Caco-2 (cell line): ENCODE measurements at regions of chr1 and their contacts with region 1.

Region 1: DNA sequence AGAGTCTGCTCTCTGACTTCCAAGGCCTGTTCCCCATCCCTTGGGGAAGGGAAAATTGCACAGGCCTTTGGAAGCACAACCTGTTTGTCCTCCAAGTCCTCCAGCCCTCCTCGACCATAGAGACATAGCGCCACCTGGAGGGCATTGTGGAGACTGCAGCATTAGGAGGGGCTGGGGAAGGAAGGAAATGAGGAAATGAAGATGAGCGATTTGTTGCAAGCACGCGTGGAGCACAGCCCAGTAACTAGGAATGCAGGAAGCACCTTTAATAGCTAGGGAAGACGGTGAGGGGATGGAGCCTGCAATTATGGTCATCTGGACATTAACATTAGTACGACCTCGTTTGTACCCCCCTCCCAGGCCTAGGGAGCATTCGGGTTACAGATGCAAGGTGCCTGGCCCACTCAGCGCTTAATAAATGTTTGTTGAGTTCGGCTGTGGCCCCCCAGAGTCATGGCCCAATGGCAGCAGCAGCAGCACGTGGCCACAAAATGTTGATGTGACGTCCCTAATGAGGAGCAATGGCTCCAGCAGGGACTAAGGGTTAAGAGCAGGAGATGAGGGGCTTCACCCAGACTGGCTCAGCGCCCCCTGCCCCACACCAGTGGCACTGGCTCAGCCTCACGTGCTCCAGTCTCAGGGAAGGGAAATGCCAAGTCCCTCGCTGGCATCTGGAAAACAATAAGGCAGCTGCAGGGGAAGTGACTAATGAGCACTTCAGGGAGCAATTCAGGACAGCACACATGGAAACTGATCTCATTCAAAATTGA is 8.0 kb upstream of the CAMK2N1 start:
- DNase-seq: peak; percentile 79 to 87
- H3K4me3 ChIP-seq: no peak overlapping the region
- H3K4me3 Mint-ChIP-seq: no peak overlapping the region
- H3K27ac Mint-ChIP-seq: no peak overlapping the region
- H3K4me1 ChIP-seq: no peaks in the 10 kb centered on the region
- H3K4me1 Mint-ChIP-seq: peaks cover 6% of the 10 kb centered on the region
- H3K27me3 ChIP-seq: no peaks in the 10 kb centered on the region
- H3K27me3 Mint-ChIP-seq: no peaks in the 10 kb centered on the region
- CTCF ChIP-seq: peak; percentile 82 to 84

Region 2: DNA sequence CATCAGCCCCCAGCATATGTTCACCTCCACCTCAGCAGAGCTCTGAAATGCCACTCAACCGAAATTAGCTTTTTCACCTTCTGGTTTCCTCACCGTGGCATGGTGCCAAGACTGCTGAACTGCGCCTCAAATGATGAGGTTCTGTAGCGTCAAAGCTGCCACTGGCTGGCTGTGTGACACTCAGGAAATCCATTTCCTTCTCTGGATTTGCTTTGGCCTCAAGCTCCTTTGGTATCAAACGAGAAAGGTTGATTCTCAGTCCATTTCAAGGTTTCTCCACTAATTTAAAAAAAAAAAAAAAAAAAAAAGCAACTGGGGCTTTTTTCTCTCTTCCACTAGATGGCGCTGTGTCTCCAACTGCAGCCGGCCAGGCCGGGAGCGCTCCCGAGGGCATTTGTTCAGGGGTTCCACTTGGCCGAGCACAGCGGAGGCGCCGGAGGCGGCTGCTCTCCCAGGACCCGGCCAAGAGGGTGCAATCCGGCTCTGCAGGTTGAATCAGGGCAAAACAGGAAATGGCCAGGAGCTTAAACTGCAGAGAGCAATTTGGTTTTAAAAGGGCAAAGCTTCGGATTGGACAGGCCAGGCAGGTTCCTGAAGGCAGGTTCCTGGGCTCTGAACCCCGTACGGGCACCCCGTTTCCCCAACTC is 281.2 kb before region 1 on chr1:
- CTCF ChIA-PET with region 1: interaction called, 3 read pairs
- POLR2A ChIA-PET with region 1: no interaction called
- intact Hi-C with region 1: loop called (anchors 2 kb)
- DNase-seq: peak; percentile 70 to 73
- H3K4me3 ChIP-seq: no peak overlapping the region
- H3K4me3 Mint-ChIP-seq: no peak overlapping the region
- H3K27ac Mint-ChIP-seq: no peak overlapping the region
- H3K4me1 ChIP-seq: no peaks in the 10 kb centered on the region
- H3K4me1 Mint-ChIP-seq: no peaks in the 10 kb centered on the region
- H3K27me3 ChIP-seq: no peaks in the 10 kb centered on the region; the same call in 1 of the 2 replicates
- H3K27me3 Mint-ChIP-seq: peaks cover 13% of the 10 kb centered on the region
- CTCF ChIP-seq: peak; percentile 52 to 74

Region 3: GRCh38 chr1:20361806-20362640 is 132.0 kb before region 1 on chr1:
- CTCF ChIA-PET with region 1: interaction called, 3 read pairs
- POLR2A ChIA-PET with region 1: no interaction called
- intact Hi-C with region 1: loop called (anchors 1 kb)
- DNase-seq: peak; percentile 60 to 74
- H3K4me3 ChIP-seq: no peak overlapping the region
- H3K4me3 Mint-ChIP-seq: no peak overlapping the region
- H3K27ac Mint-ChIP-seq: no peak overlapping the region
- H3K4me1 ChIP-seq: no peaks in the 10 kb centered on the region
- H3K4me1 Mint-ChIP-seq: no peaks in the 10 kb centered on the region
- H3K27me3 ChIP-seq: no peaks in the 10 kb centered on the region; the same call in 1 of the 2 replicates
- H3K27me3 Mint-ChIP-seq: peaks cover 8% of the 10 kb centered on the region
- CTCF ChIP-seq: peak; percentile 63 to 79

Region 4: DNA sequence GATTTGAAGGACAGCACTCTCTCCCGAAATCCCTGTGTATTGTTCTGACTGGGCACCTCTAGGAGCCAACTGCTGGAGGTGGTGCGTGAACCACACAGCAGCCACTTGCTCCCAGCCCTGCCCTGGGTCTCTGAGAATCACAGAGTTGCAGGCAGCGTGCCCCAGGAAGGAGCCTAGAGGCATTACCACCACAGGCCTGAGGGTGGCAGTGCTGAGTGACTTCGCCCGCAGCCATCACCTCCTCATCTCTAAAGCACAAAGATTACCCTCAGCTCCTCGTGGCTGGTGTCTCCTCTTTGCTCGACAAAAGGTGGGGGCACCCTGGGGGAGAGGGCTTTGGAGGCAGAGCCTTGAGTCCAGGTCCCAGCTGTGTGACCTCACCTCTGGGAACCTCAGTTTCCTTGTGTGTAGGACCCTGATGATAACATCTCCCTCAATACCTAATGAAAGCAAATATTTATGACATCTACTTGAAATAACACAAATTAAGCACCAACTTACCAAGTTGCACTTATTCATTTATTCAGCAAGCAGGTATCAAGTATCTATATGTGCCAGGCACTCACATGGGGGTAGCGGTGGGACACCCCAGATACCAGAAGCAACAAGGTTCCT is 117.0 kb before region 1 on chr1:
- CTCF ChIA-PET with region 1: interaction called, 4 read pairs
- POLR2A ChIA-PET with region 1: no interaction called
- intact Hi-C with region 1: loop called (anchors 1 kb)
- DNase-seq: peak in 1 of 2 experiments; percentile 64
- H3K4me3 ChIP-seq: no peak overlapping the region
- H3K4me3 Mint-ChIP-seq: no peak overlapping the region
- H3K27ac Mint-ChIP-seq: no peak overlapping the region
- H3K4me1 ChIP-seq: no peaks in the 10 kb centered on the region
- H3K4me1 Mint-ChIP-seq: no peaks in the 10 kb centered on the region
- H3K27me3 ChIP-seq: no peaks in the 10 kb centered on the region
- H3K27me3 Mint-ChIP-seq: peaks cover 13% of the 10 kb centered on the region
- CTCF ChIP-seq: peak; percentile 61 to 62

Region 5: GRCh38 chr1:20469406-20470076 is 24.5 kb before region 1 on chr1:
- CTCF ChIA-PET with region 1: interaction called, 4 read pairs
- POLR2A ChIA-PET with region 1: no interaction called
- intact Hi-C with region 1: loop called (anchors 1 kb)
- DNase-seq: no peak
- H3K4me3 ChIP-seq: no peak overlapping the region
- H3K4me3 Mint-ChIP-seq: no peak overlapping the region
- H3K27ac Mint-ChIP-seq: no peak overlapping the region
- H3K4me1 ChIP-seq: peaks cover 3% of the 10 kb centered on the region
- H3K4me1 Mint-ChIP-seq: peaks cover 8% of the 10 kb centered on the region
- H3K27me3 ChIP-seq: no peaks in the 10 kb centered on the region
- H3K27me3 Mint-ChIP-seq: peaks cover 6% of the 10 kb centered on the region
- CTCF ChIP-seq: no peak